Right ventricle myocardium superior (tissue), 1 donor: ENCODE measurements at regions of chr17 and their contacts with region 1.

Region 1: DNA sequence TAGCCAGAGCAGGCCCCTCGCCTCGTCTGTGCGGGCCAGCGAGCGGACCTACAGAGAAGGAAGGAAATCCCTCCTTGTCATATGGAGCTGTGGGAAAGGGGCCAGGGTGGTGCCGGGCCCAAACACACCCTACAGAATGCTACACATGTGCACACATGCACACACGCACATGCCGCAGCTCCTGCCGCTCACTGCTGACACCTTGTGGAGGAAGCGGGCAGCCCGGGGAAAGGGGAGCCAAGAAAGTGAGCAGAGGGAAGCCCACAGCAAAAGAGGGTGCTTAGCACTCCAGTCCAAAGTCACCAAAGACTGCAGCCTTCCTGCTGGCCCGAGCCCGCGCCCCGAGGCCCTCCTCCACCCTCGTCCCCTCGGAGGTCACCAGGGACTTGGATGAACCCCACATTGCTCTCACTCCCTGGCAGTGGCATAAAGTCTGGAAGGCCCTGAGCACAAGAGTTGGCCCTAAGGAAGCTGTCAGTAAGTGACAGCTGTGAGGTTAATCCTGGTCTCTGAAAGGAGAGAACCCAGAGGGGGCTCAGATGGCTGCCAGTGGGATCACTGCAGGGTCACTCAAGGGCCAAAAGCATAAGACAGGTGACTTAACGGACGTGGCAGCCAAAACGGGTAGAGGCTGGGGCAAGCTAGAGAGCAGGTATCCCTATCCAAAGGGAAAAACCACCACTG is 68.2 kb downstream of the MYO18A start:
- DNase-seq: peak; percentile 85
- ATAC-seq: peak; percentile 64

Region 2: DNA sequence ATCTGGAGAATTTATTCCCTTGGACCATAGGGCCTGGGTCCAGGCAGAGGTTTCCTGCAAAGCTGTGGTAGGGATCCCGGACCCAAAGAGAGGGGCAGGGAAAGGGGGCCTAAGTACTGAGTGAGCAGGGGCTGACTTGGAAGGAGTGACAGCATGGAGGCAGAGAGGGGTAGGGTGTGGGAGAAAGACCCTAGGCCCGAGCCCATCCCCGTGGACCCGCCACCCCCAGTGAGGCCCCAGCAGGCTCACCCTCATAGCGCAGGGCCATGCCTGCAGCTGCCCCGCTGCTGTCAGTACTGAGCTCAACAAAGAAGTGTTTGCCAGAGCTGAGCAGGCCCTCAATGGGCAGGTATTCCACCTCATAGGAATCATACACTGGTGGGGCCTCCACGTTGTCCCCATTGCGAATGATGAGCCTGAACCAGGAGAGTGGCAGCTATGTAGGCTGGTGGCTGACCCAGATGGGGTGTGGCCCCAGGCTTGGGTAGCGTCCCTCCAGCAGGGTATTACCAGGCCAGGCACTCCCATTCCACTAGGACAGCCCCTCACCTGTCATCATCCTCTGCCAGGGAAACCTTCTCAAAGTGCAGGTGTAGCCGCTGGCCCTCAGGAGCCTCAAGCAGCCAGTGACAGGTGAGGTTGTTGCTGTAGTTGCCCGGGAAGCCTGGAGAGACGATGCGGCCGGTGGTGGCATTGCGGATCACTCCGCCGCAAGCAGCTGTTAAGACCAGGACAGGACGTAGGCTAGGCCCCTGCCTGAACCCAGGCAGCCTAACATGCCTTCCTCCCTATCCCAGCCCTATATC is 151.5 kb before region 1 on chr17:
- intact Hi-C with region 1: loop called (anchors 2 kb)
- DNase-seq: peak; percentile 26
- ATAC-seq: no peak

Region 3: GRCh38 chr17:28982131-28982951 is 129.6 kb before region 1 on chr17:
- intact Hi-C with region 1: no loop called
- DNase-seq: no peak
- ATAC-seq: peak; percentile 57